ENCODE measurements at regions of chr11 and their contacts with region 1.

Region 1: GRCh38 chr11:63813035-63813562 is at the start of gene SPINDOC:
- DNase-seq: peak; percentile 72 to 93 (median 82)
- H3K4me3 ChIP-seq: peak within 1 kb of the TSS; percentile 74 to 98 (median 92)
- H3K27ac ChIP-seq: peak within 1 kb of the TSS in 54 of 59 donors; percentile 21 to 94 (median 82)
- H3K27me3 ChIP-seq: no peaks in the 10 kb centered on the region
- CTCF ChIP-seq: peak in 5 of 56 donors; percentile 14 to 24 (median 20)
- total RNA-seq, gene SPINDOC: 19.8 to 60.5 (median 27.7) TPM

Region 2: GRCh38 chr11:63641727-63642126 is 171.4 kb before region 1 on chr11:
- intact Hi-C with region 1: loop called in 1 of 2 experiments (anchors 5 kb)
- DNase-seq: no peak
- H3K4me3 ChIP-seq: no peak overlapping the region
- H3K27ac ChIP-seq: peak overlapping the region in 1 of 59 donors; percentile 15
- H3K27me3 ChIP-seq: no peaks in the 10 kb centered on the region
- CTCF ChIP-seq: peak in 14 of 56 donors; percentile 7 to 40 (median 16)

Region 3: GRCh38 chr11:63671322-63672155 is 141.6 kb before region 1 on chr11 and contains the start of gene ATL3:
- intact Hi-C with region 1: loop called in 1 of 2 experiments (anchors 5 kb)
- DNase-seq: peak; percentile 97 to 99 (median 98)
- H3K4me3 ChIP-seq: peak within 1 kb of the TSS; percentile 66 to 99 (median 92)
- H3K27ac ChIP-seq: peak within 1 kb of the TSS; percentile 18 to 99 (median 97)
- H3K27me3 ChIP-seq: no peaks in the 10 kb centered on the region
- CTCF ChIP-seq: peak in 46 of 56 donors; percentile 10 to 64 (median 42)
- total RNA-seq, gene ATL3: 15.2 to 40.3 (median 25.4) TPM

Region 4: GRCh38 chr11:63768237-63769043 is 44.7 kb before region 1 on chr11 and contains the start of gene ZFTA:
- intact Hi-C with region 1: loop called (anchors 2 to 5 kb)
- DNase-seq: peak in 5 of 10 donors; percentile 52 to 76 (median 59)
- H3K4me3 ChIP-seq: peak within 1 kb of the TSS; percentile 62 to 87 (median 78)
- H3K27ac ChIP-seq: peak within 1 kb of the TSS in 55 of 59 donors; percentile 29 to 89 (median 80)
- H3K27me3 ChIP-seq: no peaks in the 10 kb centered on the region
- CTCF ChIP-seq: peak in 41 of 56 donors; percentile 0 to 92 (median 64)
- total RNA-seq, gene ZFTA: 8.7 to 41.2 (median 25.3) TPM

Measured in dorsolateral prefrontal cortex (tissue), 120 donors.